ENCODE measurements at regions of chr5 and their contacts with region 1.

Region 1: GRCh38 chr5:150458819-150459557 is 9.4 kb upstream of the RPS14 start:
- DNase-seq: no peak
- H3K4me3 ChIP-seq: peak overlapping the region in 2 of 4 donors; percentile 20 to 49
- H3K27ac ChIP-seq: peak overlapping the region in 3 of 4 donors; percentile 3 to 51 (median 39)
- H3K4me1 ChIP-seq: peaks cover 6 to 19% (median 11%) of the 10 kb centered on the region in 3 donors
- H3K27me3 ChIP-seq: no peaks in the 10 kb centered on the region
- CTCF ChIP-seq: peak; percentile 80 to 93 (median 87)
- POLR2A ChIP-seq: no peak

Region 2: GRCh38 chr5:150523472-150524350 is 64.7 kb after region 1 on chr5:
- intact Hi-C with region 1: loop called (anchors 5 kb)
- DNase-seq: no peak
- H3K4me3 ChIP-seq: no peak overlapping the region
- H3K27ac ChIP-seq: peak overlapping the region in 2 of 4 donors; percentile 38 to 51
- H3K4me1 ChIP-seq: peaks cover 27 to 96% (median 42%) of the 10 kb centered on the region in 3 donors
- H3K27me3 ChIP-seq: no peaks in the 10 kb centered on the region
- CTCF ChIP-seq: peak in 5 of 6 experiments; percentile 57 to 71 (median 63)
- POLR2A ChIP-seq: no peak

Region 3: DNA sequence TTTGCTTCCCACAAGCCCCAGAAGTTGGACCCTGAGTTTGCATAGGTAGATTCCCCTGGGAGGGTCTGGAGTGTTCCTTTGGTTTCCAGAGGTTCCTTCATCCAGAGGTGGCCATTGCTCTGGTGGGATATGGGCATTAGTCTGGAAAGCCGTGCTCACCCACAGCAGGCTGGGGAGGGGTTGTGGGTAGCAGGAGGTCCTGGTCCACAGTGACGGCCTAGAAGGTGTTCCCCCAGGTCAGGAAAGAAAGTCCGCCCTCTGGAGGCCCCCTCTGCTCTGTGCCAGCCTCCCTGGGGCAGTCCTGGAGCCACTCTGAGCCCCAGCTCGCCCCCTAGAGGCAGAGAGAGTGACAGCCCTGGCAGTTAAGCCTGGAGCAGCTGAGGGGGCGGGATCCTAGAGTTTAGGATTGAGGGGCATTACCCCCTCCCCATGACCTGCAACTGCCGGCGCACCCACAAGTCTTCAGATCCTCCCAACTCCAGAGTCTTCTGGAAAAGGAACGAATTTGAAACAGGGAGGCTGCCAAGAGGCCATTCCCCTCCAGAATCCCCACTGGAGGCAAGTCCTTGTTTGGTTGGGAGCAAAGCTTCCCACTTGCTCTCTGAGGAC is 85.7 kb after region 1 on chr5:
- intact Hi-C with region 1: loop called (anchors 5 kb)
- DNase-seq: no peak
- H3K4me3 ChIP-seq: no peak overlapping the region
- H3K27ac ChIP-seq: peak overlapping the region in 3 of 4 donors; percentile 5 to 35 (median 29)
- H3K4me1 ChIP-seq: peaks cover 18 to 43% (median 24%) of the 10 kb centered on the region in 3 donors
- H3K27me3 ChIP-seq: no peaks in the 10 kb centered on the region
- CTCF ChIP-seq: peak; percentile 69 to 83 (median 78)
- POLR2A ChIP-seq: no peak

Measured in esophagus squamous epithelium (tissue), 5 donors.